ENCODE measurements at regions of chrX and their contacts with region 1.

Region 1: DNA sequence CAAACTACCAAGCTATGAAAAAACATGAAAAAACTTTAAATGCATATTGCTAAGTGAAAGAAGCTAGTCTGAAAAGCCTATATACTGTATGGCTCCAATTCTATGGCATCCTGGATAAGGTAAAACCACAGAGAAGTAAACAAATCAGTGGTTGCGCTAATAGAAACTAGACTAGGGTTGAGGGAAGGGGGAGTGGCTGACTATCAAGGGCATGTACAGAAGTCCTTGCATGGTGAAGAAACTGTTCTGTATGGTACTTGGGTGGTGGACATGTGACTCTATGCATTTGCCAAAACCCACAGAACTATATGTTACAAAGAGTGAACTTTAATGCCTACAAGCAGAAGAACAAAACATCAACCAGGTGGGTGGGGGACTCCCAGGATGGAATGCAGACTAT is 96.8 kb downstream of the MTMR1 start:
- DNase-seq: no peak
- H3K4me3 ChIP-seq: no peak overlapping the region
- H3K27ac ChIP-seq: no peak overlapping the region
- H3K4me1 ChIP-seq: no peaks in the 10 kb centered on the region
- H3K27me3 ChIP-seq: no peaks in the 10 kb centered on the region
- CTCF ChIP-seq: no peak

Region 2: DNA sequence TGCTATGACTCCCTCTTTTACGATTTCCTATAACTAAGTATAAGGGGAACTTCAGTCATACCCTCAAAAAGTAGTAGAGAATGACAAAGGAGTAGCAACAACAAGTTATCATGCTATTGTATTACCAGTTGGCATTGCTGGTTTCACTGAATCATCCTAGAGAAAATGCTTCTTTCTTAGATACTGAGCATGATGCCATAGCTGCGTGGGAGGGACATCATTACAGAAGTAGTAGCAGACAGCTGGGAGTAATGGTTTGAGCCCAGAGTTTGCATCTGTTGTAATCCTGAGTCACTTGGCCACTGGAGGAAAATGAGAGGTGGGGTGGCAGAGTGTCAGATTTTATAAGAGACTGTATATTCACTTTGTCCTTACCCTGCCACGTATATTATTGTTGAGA is 58.2 kb before region 1 on chrX:
- CTCF ChIA-PET with region 1: no interaction called
- dilution Hi-C with region 1: no loop called
- in situ Hi-C with region 1: no loop called
- intact Hi-C with region 1: no loop called
- DNase-seq: peak; percentile 90
- H3K4me3 ChIP-seq: no peak overlapping the region
- H3K27ac ChIP-seq: peak overlapping the region; percentile 63
- H3K4me1 ChIP-seq: peaks cover 8% of the 10 kb centered on the region
- H3K27me3 ChIP-seq: no peaks in the 10 kb centered on the region
- CTCF ChIP-seq: no peak

Region 3: GRCh38 chrX:150805736-150806135 is 15.7 kb after region 1 on chrX:
- CTCF ChIA-PET with region 1: interaction called, 21 read pairs
- dilution Hi-C with region 1: no loop called
- in situ Hi-C with region 1: no loop called
- intact Hi-C with region 1: no loop called
- DNase-seq: no peak
- H3K4me3 ChIP-seq: no peak overlapping the region
- H3K27ac ChIP-seq: no peak overlapping the region
- H3K4me1 ChIP-seq: no peaks in the 10 kb centered on the region
- H3K27me3 ChIP-seq: no peaks in the 10 kb centered on the region
- CTCF ChIP-seq: no peak